Activated naive CD8-positive, alpha-beta T cell treated with anti-CD3 and anti-CD28 coated beads, Interleukin-2, amount 10 ng/mL, durations not matched to agents 7 days and 5 days (primary cell): ENCODE measurements at regions of chr2 and their contacts with region 1.

Region 1: GRCh38 chr2:234446404-234447076 is 50.3 kb downstream of the ARL4C start:
- DNase-seq: peak; percentile 82
- ATAC-seq: peak; percentile 95
- H3K4me3 Mint-ChIP-seq: peak overlapping the region; percentile 69
- H3K27ac Mint-ChIP-seq: peak overlapping the region; percentile 98
- H3K4me1 Mint-ChIP-seq: peaks cover 69% of the 10 kb centered on the region
- H3K27me3 Mint-ChIP-seq: no peaks in the 10 kb centered on the region

Region 2: DNA sequence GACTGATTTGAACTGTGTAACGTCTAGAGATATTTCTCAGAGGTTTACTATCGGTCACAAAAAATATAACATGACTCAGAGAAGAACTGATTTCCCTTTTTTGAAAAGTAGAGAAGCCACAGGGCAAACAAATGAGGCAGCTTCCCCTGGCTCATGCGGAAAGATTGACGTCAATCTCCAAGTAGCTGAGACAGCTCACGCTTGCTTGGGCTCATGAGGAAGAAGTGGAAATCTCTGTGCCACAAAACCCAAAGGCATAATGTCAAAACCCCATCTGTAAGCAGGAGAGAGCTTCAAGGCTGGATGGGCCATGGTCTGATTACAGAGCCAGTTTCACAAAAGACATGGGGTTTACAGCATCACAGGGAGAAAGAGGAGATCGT is 137.7 kb before region 1 on chr2:
- POLR2A ChIA-PET with region 1: interaction called, 11 read pairs
- DNase-seq: no peak
- ATAC-seq: peak; percentile 90
- H3K4me3 Mint-ChIP-seq: peak overlapping the region; percentile 80
- H3K27ac Mint-ChIP-seq: peak overlapping the region; percentile 97
- H3K4me1 Mint-ChIP-seq: peaks cover 48% of the 10 kb centered on the region
- H3K27me3 Mint-ChIP-seq: no peaks in the 10 kb centered on the region

Region 3: GRCh38 chr2:234374736-234375135 is 71.8 kb before region 1 on chr2:
- POLR2A ChIA-PET with region 1: interaction called, 12 read pairs
- DNase-seq: no peak
- ATAC-seq: no peak
- H3K4me3 Mint-ChIP-seq: no peak overlapping the region
- H3K27ac Mint-ChIP-seq: no peak overlapping the region
- H3K4me1 Mint-ChIP-seq: peaks cover 40% of the 10 kb centered on the region
- H3K27me3 Mint-ChIP-seq: no peaks in the 10 kb centered on the region

Region 4: GRCh38 chr2:234391625-234392024 is 54.9 kb before region 1 on chr2:
- POLR2A ChIA-PET with region 1: no interaction called
- DNase-seq: no peak
- ATAC-seq: no peak
- H3K4me3 Mint-ChIP-seq: no peak overlapping the region
- H3K27ac Mint-ChIP-seq: no peak overlapping the region
- H3K4me1 Mint-ChIP-seq: peaks cover 38% of the 10 kb centered on the region
- H3K27me3 Mint-ChIP-seq: no peaks in the 10 kb centered on the region

Region 5: GRCh38 chr2:234425619-234426603 is 20.6 kb before region 1 on chr2:
- POLR2A ChIA-PET with region 1: interaction called, 212 read pairs
- DNase-seq: peak; percentile 72
- ATAC-seq: peak; percentile 78
- H3K4me3 Mint-ChIP-seq: peak overlapping the region; percentile 83
- H3K27ac Mint-ChIP-seq: peak overlapping the region; percentile 100
- H3K4me1 Mint-ChIP-seq: peaks cover 75% of the 10 kb centered on the region
- H3K27me3 Mint-ChIP-seq: no peaks in the 10 kb centered on the region

Region 6: DNA sequence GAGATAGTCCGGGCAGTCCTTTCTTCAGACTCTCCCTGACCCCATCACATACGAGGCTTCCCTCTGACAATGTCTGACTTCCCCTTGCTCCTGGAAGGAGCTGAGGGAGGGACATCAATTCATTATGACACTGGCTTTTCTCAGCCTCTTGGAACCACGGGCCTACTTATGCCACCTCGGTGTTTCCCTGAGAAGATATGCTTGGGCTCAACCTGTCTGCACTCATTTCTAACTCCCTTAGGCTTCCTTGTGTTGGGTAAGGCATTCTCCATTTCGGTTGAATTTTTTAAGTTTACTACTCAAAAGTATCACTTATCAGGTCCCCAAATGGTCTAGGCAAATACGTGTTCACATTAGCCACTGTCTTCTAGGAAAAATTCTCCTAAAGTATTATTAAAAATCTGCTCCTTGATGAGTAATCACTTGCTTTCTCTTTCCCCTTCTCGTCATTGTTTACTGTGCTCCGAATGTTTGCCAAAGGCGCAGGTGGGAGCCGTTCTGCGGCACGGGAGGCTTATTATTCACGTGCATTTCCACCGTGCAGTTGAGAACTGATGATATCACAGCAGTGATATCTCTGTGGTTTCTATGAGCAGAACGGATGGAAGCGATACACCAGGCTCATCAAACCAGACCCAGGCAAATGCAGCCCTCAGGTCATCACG is 17.2 kb after region 1 on chr2:
- POLR2A ChIA-PET with region 1: interaction called, 22 read pairs
- DNase-seq: peak; percentile 49
- ATAC-seq: peak; percentile 74
- H3K4me3 Mint-ChIP-seq: peak overlapping the region; percentile 86
- H3K27ac Mint-ChIP-seq: peak overlapping the region; percentile 90
- H3K4me1 Mint-ChIP-seq: peaks cover 42% of the 10 kb centered on the region
- H3K27me3 Mint-ChIP-seq: peaks cover 3% of the 10 kb centered on the region

Region 7: GRCh38 chr2:234483568-234484251 is 37.2 kb after region 1 on chr2:
- POLR2A ChIA-PET with region 1: interaction called, 247 read pairs
- DNase-seq: peak; percentile 79
- ATAC-seq: peak; percentile 78
- H3K4me3 Mint-ChIP-seq: peak overlapping the region; percentile 72
- H3K27ac Mint-ChIP-seq: peak overlapping the region; percentile 85
- H3K4me1 Mint-ChIP-seq: peaks cover 57% of the 10 kb centered on the region
- H3K27me3 Mint-ChIP-seq: no peaks in the 10 kb centered on the region

Region 8: DNA sequence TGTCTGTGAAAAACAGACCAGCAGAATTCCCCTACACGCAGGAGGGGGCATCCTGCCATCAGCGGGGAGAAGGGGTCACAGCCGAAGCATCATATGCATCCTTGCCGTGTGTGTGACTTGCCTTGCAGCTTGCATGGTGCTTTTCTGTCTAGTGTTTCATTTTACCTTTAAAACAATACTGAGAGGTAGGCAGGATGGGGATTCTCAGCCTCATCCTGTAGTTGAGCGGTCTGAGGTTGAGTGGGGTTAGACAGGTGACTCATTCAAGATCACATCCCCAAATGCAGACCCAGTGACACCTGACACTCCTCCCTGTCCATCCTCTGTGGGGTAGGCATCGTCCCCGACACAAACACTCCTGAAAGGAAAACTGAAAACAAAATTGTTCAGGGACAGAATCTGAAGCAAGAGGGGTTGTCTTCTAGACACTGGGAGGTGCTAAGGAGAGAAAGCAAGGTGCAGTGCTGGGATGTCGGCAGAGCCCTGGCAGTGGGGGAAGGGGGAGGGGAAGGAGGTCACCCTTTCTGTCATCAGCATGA is 42.4 kb after region 1 on chr2:
- POLR2A ChIA-PET with region 1: interaction called, 466 read pairs
- DNase-seq: peak; percentile 68
- ATAC-seq: peak; percentile 76
- H3K4me3 Mint-ChIP-seq: peak overlapping the region; percentile 97
- H3K27ac Mint-ChIP-seq: peak overlapping the region; percentile 99
- H3K4me1 Mint-ChIP-seq: peaks cover 71% of the 10 kb centered on the region
- H3K27me3 Mint-ChIP-seq: no peaks in the 10 kb centered on the region